ENCODE measurements at regions of chr10 and their contacts with region 1.

Region 1: GRCh38 chr10:132223156-132223590 is 36.4 kb downstream of the DPYSL4 start:
- DNase-seq: no peak
- H3K4me3 ChIP-seq: no peak overlapping the region
- H3K27ac ChIP-seq: no peak overlapping the region
- H3K4me1 ChIP-seq: peaks cover 4 to 9% (median 7%) of the 10 kb centered on the region in 4 donors
- H3K27me3 ChIP-seq: no peaks in the 10 kb centered on the region
- CTCF ChIP-seq: peak; percentile 87 to 97 (median 93)
- EP300 ChIP-seq: no peak
- POLR2A ChIP-seq: no peak

Region 2: DNA sequence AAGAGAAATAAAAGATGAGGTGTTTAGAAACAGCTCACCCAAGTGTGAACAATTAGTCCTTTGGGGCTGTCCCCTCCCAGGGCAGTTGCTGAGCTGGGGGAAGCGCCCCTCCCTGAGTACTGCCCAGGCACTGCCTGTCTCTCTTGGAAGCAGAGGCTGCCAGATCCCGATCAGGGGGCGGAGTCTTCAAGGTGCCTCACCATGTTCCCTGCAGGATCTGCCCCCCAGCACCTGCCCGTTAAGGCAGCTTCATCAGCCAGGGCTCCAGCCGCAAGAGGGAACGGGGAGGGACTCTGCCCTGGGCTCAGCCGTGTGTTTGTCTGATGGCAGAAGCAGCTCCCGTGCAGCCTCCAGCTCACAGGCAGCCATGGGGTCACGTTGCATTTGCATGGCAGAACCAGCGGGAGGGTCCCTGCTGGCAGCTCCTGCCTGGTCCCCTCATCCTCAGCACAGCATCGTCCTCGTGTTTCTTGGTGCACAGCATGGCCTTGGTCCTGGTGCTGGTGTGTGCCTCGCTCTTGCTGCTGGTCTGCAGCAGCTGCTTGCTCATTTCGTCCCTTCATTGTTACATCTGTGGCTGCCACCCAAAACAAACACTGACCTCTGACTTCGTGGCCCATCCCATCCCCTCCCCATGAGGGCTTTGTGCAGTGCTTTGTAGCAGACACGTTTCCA is 47.1 kb before region 1 on chr10:
- intact Hi-C with region 1: no loop called
- DNase-seq: no peak
- H3K4me3 ChIP-seq: no peak overlapping the region
- H3K27ac ChIP-seq: no peak overlapping the region
- H3K4me1 ChIP-seq: peaks cover 8 to 21% (median 10%) of the 10 kb centered on the region in 4 donors
- H3K27me3 ChIP-seq: peaks cover 0 to 32% (median 0%) of the 10 kb centered on the region in 4 donors
- CTCF ChIP-seq: no peak
- EP300 ChIP-seq: no peak
- POLR2A ChIP-seq: no peak

Region 3: GRCh38 chr10:132351611-132352010 is 128.4 kb after region 1 on chr10:
- intact Hi-C with region 1: loop called (anchors 1 kb)
- DNase-seq: no peak
- H3K4me3 ChIP-seq: no peak overlapping the region
- H3K27ac ChIP-seq: no peak overlapping the region
- H3K4me1 ChIP-seq: peaks cover 0 to 9% (median 0%) of the 10 kb centered on the region in 4 donors
- H3K27me3 ChIP-seq: no peaks in the 10 kb centered on the region
- CTCF ChIP-seq: no peak
- EP300 ChIP-seq: no peak
- POLR2A ChIP-seq: no peak

Region 4: GRCh38 chr10:132452631-132453469 is 229.7 kb after region 1 on chr10:
- intact Hi-C with region 1: loop called (anchors 2 kb)
- DNase-seq: no peak
- H3K4me3 ChIP-seq: peak overlapping the region; percentile 9 to 43 (median 22)
- H3K27ac ChIP-seq: peak overlapping the region in 2 of 4 donors; percentile 26 to 40
- H3K4me1 ChIP-seq: peaks cover 15 to 35% (median 30%) of the 10 kb centered on the region in 4 donors
- H3K27me3 ChIP-seq: peaks cover 0 to 15% (median 0%) of the 10 kb centered on the region in 4 donors
- CTCF ChIP-seq: peak; percentile 97 to 100 (median 99)
- EP300 ChIP-seq: no peak
- POLR2A ChIP-seq: no peak

Measured in esophagus muscularis mucosa (tissue), 4 donors.